ENCODE measurements at regions of chr6 and their contacts with region 1.

Region 1: DNA sequence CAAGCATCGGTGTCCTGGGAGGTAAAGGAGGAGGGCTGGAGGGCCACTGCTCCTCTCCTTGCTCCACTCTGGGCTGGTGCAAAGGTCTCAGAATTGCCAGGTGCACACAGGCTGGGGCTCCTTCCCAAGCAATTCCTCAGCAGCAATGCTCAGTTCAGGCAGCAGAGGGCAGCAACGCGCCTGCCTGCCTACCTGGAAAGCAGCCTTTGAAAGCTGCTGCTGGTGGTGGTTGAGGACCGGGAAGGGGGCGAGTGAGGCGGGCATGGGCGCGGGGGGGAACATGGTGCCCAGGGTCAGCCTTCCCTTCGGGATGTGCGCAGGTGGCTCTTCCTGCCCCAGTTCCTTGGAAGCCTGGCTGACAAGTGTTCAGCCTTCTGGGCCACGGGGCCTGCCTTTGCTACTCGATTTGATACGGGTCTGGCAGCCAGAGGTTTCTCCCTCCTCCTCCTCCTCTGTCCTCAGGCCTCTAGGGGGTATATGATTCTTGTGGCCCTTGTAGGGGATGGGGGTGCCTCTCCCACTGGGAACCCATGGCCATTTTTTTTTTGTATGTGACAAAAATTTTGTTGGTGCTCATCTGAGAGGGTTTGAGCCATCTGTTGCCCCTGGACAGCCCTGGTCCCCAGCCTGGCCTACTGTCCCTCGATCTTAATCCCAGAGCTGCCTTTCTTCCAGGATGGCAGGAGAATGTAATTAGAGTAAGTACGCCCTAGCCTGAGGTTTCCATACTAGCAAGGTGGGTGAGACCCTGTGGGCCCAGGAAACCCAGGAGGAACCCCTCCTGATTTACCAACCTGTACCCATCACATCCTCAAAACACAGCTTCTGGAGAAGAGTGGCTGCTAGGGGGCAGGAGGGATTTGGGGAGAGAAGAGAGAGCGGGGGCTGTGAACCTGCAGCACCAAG is 20.1 kb downstream of the MRPS18A start:
- DNase-seq: peak; percentile 68 to 97
- H3K4me3 ChIP-seq: peak overlapping the region in 3 of 4 experiments; percentile 11 to 48 (median 23); a peak in 4 of 8 replicates
- H3K27ac ChIP-seq: no peak overlapping the region
- H3K4me1 ChIP-seq: peaks cover 5 to 27% (median 22%) of the 10 kb centered on the region in 4 experiments
- H3K27me3 ChIP-seq: no peaks in the 10 kb centered on the region; a peak in 2 of 7 replicates
- CTCF ChIP-seq: peak in 2 of 3 experiments; percentile 94 to 99; a peak in 3 of 4 replicates
- EP300 ChIP-seq: no peak
- POLR2A ChIP-seq: no peak
- RAD21 ChIP-seq: peak; percentile 94 to 95

Region 2: DNA sequence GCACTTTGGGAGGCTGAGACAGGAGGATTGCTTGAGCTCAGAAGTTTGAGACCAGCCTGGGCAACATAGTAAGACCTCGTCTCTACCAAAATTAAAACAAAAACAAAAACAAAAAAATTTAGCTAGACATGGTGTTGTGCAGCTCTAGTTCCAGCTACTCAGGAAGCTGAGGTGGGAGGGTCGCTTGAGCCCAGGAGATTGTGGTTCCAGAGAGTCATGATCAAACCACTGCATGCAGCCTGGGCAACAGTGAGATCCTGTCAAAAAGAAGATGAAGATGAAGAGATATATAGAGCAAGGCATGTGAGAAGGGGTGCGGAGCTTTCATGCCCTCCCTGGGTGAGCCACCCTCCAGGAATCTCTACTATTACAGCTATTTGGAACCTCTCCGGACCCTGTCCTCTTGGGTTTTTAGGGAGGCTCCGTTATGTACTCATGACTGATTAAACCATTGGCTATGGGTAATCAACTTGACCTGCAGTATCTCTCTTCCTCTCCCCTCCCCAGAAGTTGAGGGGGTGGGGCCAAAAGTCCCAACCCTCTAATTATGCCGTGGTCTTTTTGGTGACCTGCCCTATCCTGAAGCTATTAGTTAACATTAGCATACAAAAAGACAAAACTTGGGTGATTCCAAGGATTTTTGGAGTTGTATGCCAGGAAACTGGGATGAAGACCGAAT is 82.5 kb before region 1 on chr6:
- CTCF ChIA-PET with region 1: no interaction called
- POLR2A ChIA-PET with region 1: no interaction called
- DNase-seq: no peak
- H3K4me3 ChIP-seq: no peak overlapping the region
- H3K27ac ChIP-seq: no peak overlapping the region
- H3K4me1 ChIP-seq: no peaks in the 10 kb centered on the region
- H3K27me3 ChIP-seq: no peaks in the 10 kb centered on the region
- CTCF ChIP-seq: no peak
- EP300 ChIP-seq: no peak
- POLR2A ChIP-seq: no peak
- RAD21 ChIP-seq: no peak

Region 3: GRCh38 chr6:43657221-43657802 is 10.2 kb before region 1 on chr6:
- CTCF ChIA-PET with region 1: interaction called, 20 read pairs
- POLR2A ChIA-PET with region 1: interaction called, 12 read pairs
- DNase-seq: no peak
- H3K4me3 ChIP-seq: no peak overlapping the region
- H3K27ac ChIP-seq: no peak overlapping the region
- H3K4me1 ChIP-seq: peaks cover 0 to 4% (median 1%) of the 10 kb centered on the region in 4 experiments; a peak in 2 of 7 replicates
- H3K27me3 ChIP-seq: no peaks in the 10 kb centered on the region
- CTCF ChIP-seq: peak in 1 of 3 experiments; percentile 12; a peak in 1 of 4 replicates
- EP300 ChIP-seq: no peak
- POLR2A ChIP-seq: no peak
- RAD21 ChIP-seq: no peak

Region 4: GRCh38 chr6:43702534-43703440 is 35.3 kb after region 1 on chr6:
- CTCF ChIA-PET with region 1: interaction called, 5 read pairs
- POLR2A ChIA-PET with region 1: interaction called, 31 read pairs
- DNase-seq: peak; percentile 90 to 91
- H3K4me3 ChIP-seq: peak overlapping the region in 3 of 4 experiments; percentile 7 to 48 (median 18); a peak in 4 of 8 replicates
- H3K27ac ChIP-seq: peak overlapping the region; percentile 79
- H3K4me1 ChIP-seq: peaks cover 24 to 38% (median 27%) of the 10 kb centered on the region in 4 experiments
- H3K27me3 ChIP-seq: no peaks in the 10 kb centered on the region
- CTCF ChIP-seq: no peak
- EP300 ChIP-seq: peak in 1 of 2 experiments; percentile 84; a peak in 1 of 3 replicates
- POLR2A ChIP-seq: peak in 1 of 2 experiments; percentile 83; a peak in 1 of 3 replicates
- RAD21 ChIP-seq: peak in 1 of 2 experiments; percentile 14; a peak in 2 of 4 replicates

Region 5: GRCh38 chr6:43733471-43734293 is 66.2 kb after region 1 on chr6:
- CTCF ChIA-PET with region 1: interaction called, 31 read pairs
- POLR2A ChIA-PET with region 1: interaction called, 3 read pairs
- DNase-seq: no peak
- H3K4me3 ChIP-seq: no peak overlapping the region
- H3K27ac ChIP-seq: no peak overlapping the region
- H3K4me1 ChIP-seq: peaks cover 0 to 11% (median under 1%) of the 10 kb centered on the region in 4 experiments; a peak in 3 of 7 replicates
- H3K27me3 ChIP-seq: no peaks in the 10 kb centered on the region
- CTCF ChIP-seq: no peak
- EP300 ChIP-seq: no peak
- POLR2A ChIP-seq: no peak
- RAD21 ChIP-seq: no peak

Region 6: GRCh38 chr6:43774776-43775534 is 107.5 kb after region 1 on chr6:
- CTCF ChIA-PET with region 1: interaction called, 88 read pairs
- POLR2A ChIA-PET with region 1: interaction called, 38 read pairs
- DNase-seq: peak in 1 of 2 experiments; percentile 85
- H3K4me3 ChIP-seq: peak overlapping the region in 2 of 4 experiments; percentile 12 to 87; a peak in 4 of 8 replicates
- H3K27ac ChIP-seq: peak overlapping the region; percentile 37; the same call in 1 of the 2 replicates
- H3K4me1 ChIP-seq: peaks cover 0 to 24% (median 18%) of the 10 kb centered on the region in 4 experiments; a peak in 6 of 7 replicates
- H3K27me3 ChIP-seq: no peaks in the 10 kb centered on the region
- CTCF ChIP-seq: peak in 2 of 3 experiments; percentile 84 to 86; a peak in 3 of 4 replicates
- EP300 ChIP-seq: no peak
- POLR2A ChIP-seq: no peak
- RAD21 ChIP-seq: peak; percentile 65 to 69

Measured in H1 (cell line).